ENCODE measurements at regions of chr1 and their contacts with region 1.

Region 1: GRCh38 chr1:109112652-109113285 is 1.1 kb upstream of the ELAPOR1 start:
- DNase-seq: peak; percentile 31
- ATAC-seq: peak; percentile 89
- H3K4me3 ChIP-seq: peak overlapping the region; percentile 45; the same call in 1 of the 2 replicates
- H3K27ac ChIP-seq: no peak overlapping the region
- H3K4me1 ChIP-seq: peaks cover 15% of the 10 kb centered on the region
- H3K27me3 ChIP-seq: peaks cover 8 to 11% of the 10 kb centered on the region in 2 experiments
- CTCF ChIP-seq: peak; percentile 92 to 95 (median 93)
- EP300 ChIP-seq: no peak
- POLR2A ChIP-seq: no peak
- RAD21 ChIP-seq: peak; percentile 74

Region 2: GRCh38 chr1:108897865-108898720 is 214.7 kb before region 1 on chr1:
- CTCF ChIA-PET with region 1: interaction called, 11 read pairs
- POLR2A ChIA-PET with region 1: no interaction called
- RAD21 ChIA-PET with region 1: no interaction called
- SMC1A ChIA-PET with region 1: no interaction called
- in situ Hi-C with region 1: no loop called
- intact Hi-C with region 1: no loop called
- DNase-seq: no peak
- ATAC-seq: peak; percentile 82
- H3K4me3 ChIP-seq: no peak overlapping the region
- H3K27ac ChIP-seq: no peak overlapping the region
- H3K4me1 ChIP-seq: no peaks in the 10 kb centered on the region
- H3K27me3 ChIP-seq: no peaks in the 10 kb centered on the region
- CTCF ChIP-seq: peak; percentile 55 to 80 (median 64)
- EP300 ChIP-seq: no peak
- POLR2A ChIP-seq: no peak
- RAD21 ChIP-seq: peak; percentile 86

Region 3: GRCh38 chr1:109027841-109028240 is 84.9 kb before region 1 on chr1:
- CTCF ChIA-PET with region 1: interaction called, 4 read pairs
- POLR2A ChIA-PET with region 1: no interaction called
- RAD21 ChIA-PET with region 1: no interaction called
- SMC1A ChIA-PET with region 1: interaction called, 3 read pairs
- in situ Hi-C with region 1: no loop called
- intact Hi-C with region 1: loop called (anchors 5 kb)
- DNase-seq: no peak
- ATAC-seq: no peak
- H3K4me3 ChIP-seq: no peak overlapping the region
- H3K27ac ChIP-seq: no peak overlapping the region
- H3K4me1 ChIP-seq: no peaks in the 10 kb centered on the region
- H3K27me3 ChIP-seq: no peaks in the 10 kb centered on the region
- CTCF ChIP-seq: peak in 1 of 3 experiments; percentile 15; a peak in 2 of 6 replicates
- EP300 ChIP-seq: no peak
- POLR2A ChIP-seq: no peak
- RAD21 ChIP-seq: no peak

Region 4: DNA sequence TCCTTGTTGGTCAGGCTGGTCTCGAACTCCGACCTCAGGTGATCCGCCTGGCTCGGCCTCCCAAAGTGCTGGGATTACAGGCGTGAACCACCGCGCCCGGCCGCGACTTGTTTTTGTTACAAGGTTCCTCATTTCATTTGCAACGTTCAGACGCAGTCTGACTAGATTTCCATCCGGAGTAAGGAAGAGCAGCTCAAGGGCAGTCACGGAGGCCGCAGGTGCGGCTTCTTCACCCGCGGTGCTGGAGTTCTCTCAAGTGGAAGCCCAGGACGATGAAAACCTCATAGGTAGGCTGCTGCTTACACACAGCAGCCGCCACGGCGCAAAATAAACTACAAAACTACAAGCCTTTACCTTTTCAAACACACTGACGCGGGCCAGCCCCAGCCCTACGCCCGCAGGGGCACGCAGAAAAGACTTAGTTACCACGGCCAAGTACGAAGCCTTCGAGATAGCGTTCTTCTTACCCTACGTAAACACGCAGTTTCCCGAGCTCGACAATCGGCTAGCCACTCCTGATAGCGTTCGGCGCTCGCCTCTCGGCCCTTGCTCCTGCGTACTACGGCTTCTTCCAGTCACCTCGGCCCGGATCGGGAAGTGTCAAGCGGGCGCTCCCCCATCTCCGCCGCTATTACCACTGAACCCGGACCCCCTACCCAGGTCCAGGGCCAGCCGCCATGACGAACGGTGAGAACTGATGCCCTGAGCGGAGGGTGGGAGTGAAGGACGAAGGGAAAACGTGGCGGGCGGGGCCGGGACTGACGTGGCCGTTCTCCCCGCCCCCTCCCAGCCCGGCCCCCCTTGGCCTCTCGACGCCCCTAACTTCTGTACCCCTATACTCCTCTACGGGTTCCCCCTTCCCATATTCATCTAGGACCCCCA is 22.3 kb before region 1 on chr1 and contains the start of gene TMEM167B:
- CTCF ChIA-PET with region 1: interaction called, 21 read pairs
- POLR2A ChIA-PET with region 1: interaction called, 3 read pairs
- RAD21 ChIA-PET with region 1: interaction called, 7 read pairs
- SMC1A ChIA-PET with region 1: interaction called, 6 read pairs
- in situ Hi-C with region 1: no loop called
- intact Hi-C with region 1: loop called (anchors 1 kb)
- DNase-seq: peak; percentile 78
- ATAC-seq: peak; percentile 89
- H3K4me3 ChIP-seq: peak within 1 kb of the TSS; percentile 95
- H3K27ac ChIP-seq: peak within 1 kb of the TSS; percentile 91
- H3K4me1 ChIP-seq: peaks cover 9% of the 10 kb centered on the region
- H3K27me3 ChIP-seq: no peaks in the 10 kb centered on the region
- CTCF ChIP-seq: no peak
- EP300 ChIP-seq: 0 out of 4 replicates have a peak, but pooled peaks of 1 of the 2 experiments have one; percentile 6
- POLR2A ChIP-seq: peak; percentile 89
- RAD21 ChIP-seq: no peak
- polyA plus RNA-seq, gene TMEM167B: 15.6 to 24.8 TPM

Region 5: GRCh38 chr1:109131059-109131458 is 18.3 kb after region 1 on chr1:
- CTCF ChIA-PET with region 1: interaction called, 24 read pairs
- POLR2A ChIA-PET with region 1: no interaction called
- RAD21 ChIA-PET with region 1: interaction called, 3 read pairs
- SMC1A ChIA-PET with region 1: interaction called, 3 read pairs
- in situ Hi-C with region 1: no loop called
- intact Hi-C with region 1: no loop called
- DNase-seq: no peak
- ATAC-seq: peak; percentile 51
- H3K4me3 ChIP-seq: no peak overlapping the region
- H3K27ac ChIP-seq: no peak overlapping the region
- H3K4me1 ChIP-seq: peaks cover 10% of the 10 kb centered on the region
- H3K27me3 ChIP-seq: no peaks in the 10 kb centered on the region
- CTCF ChIP-seq: no peak
- EP300 ChIP-seq: no peak
- POLR2A ChIP-seq: no peak
- RAD21 ChIP-seq: no peak

Region 6: GRCh38 chr1:109142260-109142659 is 29.5 kb after region 1 on chr1:
- CTCF ChIA-PET with region 1: no interaction called
- POLR2A ChIA-PET with region 1: no interaction called
- RAD21 ChIA-PET with region 1: no interaction called
- SMC1A ChIA-PET with region 1: no interaction called
- in situ Hi-C with region 1: no loop called
- intact Hi-C with region 1: no loop called
- DNase-seq: no peak
- ATAC-seq: no peak
- H3K4me3 ChIP-seq: no peak overlapping the region
- H3K27ac ChIP-seq: no peak overlapping the region
- H3K4me1 ChIP-seq: no peaks in the 10 kb centered on the region
- H3K27me3 ChIP-seq: no peaks in the 10 kb centered on the region
- CTCF ChIP-seq: no peak
- EP300 ChIP-seq: no peak
- POLR2A ChIP-seq: no peak
- RAD21 ChIP-seq: no peak

Region 7: GRCh38 chr1:109193653-109194590 is 81.2 kb after region 1 on chr1:
- CTCF ChIA-PET with region 1: interaction called, 15 read pairs
- POLR2A ChIA-PET with region 1: no interaction called
- RAD21 ChIA-PET with region 1: interaction called, 6 read pairs
- SMC1A ChIA-PET with region 1: interaction called, 3 read pairs
- in situ Hi-C with region 1: no loop called
- intact Hi-C with region 1: loop called (anchors 1 kb)
- DNase-seq: peak; percentile 37
- ATAC-seq: peak; percentile 89
- H3K4me3 ChIP-seq: no peak overlapping the region
- H3K27ac ChIP-seq: no peak overlapping the region
- H3K4me1 ChIP-seq: no peaks in the 10 kb centered on the region; the same call in 1 of the 2 replicates
- H3K27me3 ChIP-seq: no peaks in the 10 kb centered on the region
- CTCF ChIP-seq: peak; percentile 82 to 90 (median 87)
- EP300 ChIP-seq: no peak
- POLR2A ChIP-seq: no peak
- RAD21 ChIP-seq: peak; percentile 79